Ovary (tissue), 10 donors: ENCODE measurements at regions of chr9 and their contacts with region 1.

Region 1: DNA sequence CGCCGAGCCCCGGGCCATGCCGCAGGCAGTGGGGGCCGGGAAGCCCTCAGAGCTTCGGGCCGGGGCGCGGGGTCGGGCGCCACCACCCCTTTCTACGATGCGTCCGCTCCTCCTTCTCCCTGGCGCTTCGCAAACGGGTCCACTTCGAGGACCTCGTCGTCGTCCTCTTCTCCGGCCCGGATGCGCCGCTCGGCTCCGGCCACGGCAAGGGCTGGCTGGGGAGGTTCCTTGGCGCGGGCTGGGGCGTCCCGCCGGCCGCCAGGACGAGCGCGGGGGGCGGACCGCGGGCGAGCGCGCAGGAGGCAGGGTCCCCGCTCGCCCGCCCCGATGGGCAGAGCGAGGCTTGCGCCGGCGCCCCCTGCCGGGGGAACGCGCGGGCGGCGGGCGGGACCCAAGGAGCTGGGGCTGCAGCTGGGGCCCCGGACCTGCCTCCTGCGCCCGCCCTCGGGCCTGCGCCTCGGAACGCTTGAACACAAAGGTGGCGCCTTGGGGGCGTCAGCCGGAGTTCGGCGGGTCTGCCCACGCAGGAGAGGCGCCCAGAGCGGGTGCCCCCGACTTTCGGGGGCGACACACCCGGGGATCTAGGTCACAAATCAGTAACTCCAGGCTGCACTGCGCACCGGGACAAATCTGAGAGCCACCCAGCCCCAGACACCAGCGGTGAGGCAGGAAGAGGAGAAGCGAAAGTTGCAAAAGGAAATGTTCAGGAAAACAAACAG is at the start of gene ROR2:
- DNase-seq: peak; percentile 77 to 92 (median 85)
- H3K4me3 ChIP-seq: peak within 1 kb of the TSS; percentile 49
- H3K27ac ChIP-seq: peak within 1 kb of the TSS; percentile 61 to 85
- H3K4me1 ChIP-seq: peaks cover 7% of the 10 kb centered on the region
- H3K27me3 ChIP-seq: no peaks in the 10 kb centered on the region
- CTCF ChIP-seq: peak; percentile 20 to 97 (median 92)
- EP300 ChIP-seq: no peak
- POLR2A ChIP-seq: no peak
- total RNA-seq, gene ROR2: 13.1 to 35.5 (median 31.8) TPM

Region 2: DNA sequence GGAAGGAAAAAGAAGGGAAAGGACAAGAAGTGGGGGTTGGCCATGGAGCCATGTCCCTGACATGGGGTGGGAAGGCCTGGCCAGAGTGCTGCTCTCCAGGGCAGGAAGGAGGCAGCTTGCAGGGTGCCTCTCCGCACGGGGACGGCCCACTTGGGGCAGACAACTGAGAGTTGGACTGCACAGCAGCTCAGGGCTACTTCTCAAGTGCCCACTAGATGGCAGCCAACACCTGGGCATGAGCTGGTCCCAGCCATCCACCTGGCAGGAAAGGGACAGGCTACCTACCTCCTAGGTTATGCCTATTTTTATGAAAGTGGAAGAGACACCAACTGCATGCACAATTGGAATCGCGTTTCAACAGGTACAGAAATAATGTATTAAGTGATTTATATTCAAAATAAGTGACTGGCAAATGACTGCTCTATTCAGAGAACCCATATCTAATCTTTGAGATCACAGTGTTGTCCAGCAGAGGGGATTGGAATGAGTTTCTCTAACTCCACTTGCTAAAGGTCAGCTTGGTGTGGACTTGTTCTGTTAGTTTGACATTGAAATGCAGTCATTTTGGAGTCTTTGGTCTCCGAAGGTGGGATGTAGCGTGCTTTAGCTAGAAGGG is 1035.1 kb before region 1 on chr9:
- intact Hi-C with region 1: loop called in 1 of 4 experiments (anchors 10 kb)
- DNase-seq: peak; percentile 62 to 80 (median 77)
- H3K4me3 ChIP-seq: no peak overlapping the region
- H3K27ac ChIP-seq: no peak overlapping the region
- H3K4me1 ChIP-seq: no peaks in the 10 kb centered on the region
- H3K27me3 ChIP-seq: no peaks in the 10 kb centered on the region
- CTCF ChIP-seq: peak; percentile 71 to 91 (median 88)
- EP300 ChIP-seq: no peak
- POLR2A ChIP-seq: no peak

Region 3: GRCh38 chr9:91775011-91775707 is 174.9 kb before region 1 on chr9:
- intact Hi-C with region 1: loop called (anchors 2 to 10 kb)
- DNase-seq: peak; percentile 62 to 80 (median 79)
- H3K4me3 ChIP-seq: no peak overlapping the region
- H3K27ac ChIP-seq: no peak overlapping the region
- H3K4me1 ChIP-seq: peaks cover 3% of the 10 kb centered on the region
- H3K27me3 ChIP-seq: no peaks in the 10 kb centered on the region
- CTCF ChIP-seq: peak; percentile 71 to 87 (median 81)
- EP300 ChIP-seq: no peak
- POLR2A ChIP-seq: no peak

Region 4: GRCh38 chr9:91847581-91848091 is 102.5 kb before region 1 on chr9:
- intact Hi-C with region 1: loop called in 2 of 4 experiments (anchors 10 kb)
- DNase-seq: peak; percentile 52 to 73 (median 63)
- H3K4me3 ChIP-seq: no peak overlapping the region
- H3K27ac ChIP-seq: peak overlapping the region in 1 of 2 donors; percentile 15
- H3K4me1 ChIP-seq: peaks cover 15% of the 10 kb centered on the region
- H3K27me3 ChIP-seq: no peaks in the 10 kb centered on the region
- CTCF ChIP-seq: no peak
- EP300 ChIP-seq: no peak
- POLR2A ChIP-seq: no peak

Region 5: GRCh38 chr9:91884696-91885687 is 65.1 kb before region 1 on chr9:
- intact Hi-C with region 1: no loop called
- DNase-seq: no peak
- H3K4me3 ChIP-seq: no peak overlapping the region
- H3K27ac ChIP-seq: no peak overlapping the region
- H3K4me1 ChIP-seq: peaks cover 35% of the 10 kb centered on the region
- H3K27me3 ChIP-seq: no peaks in the 10 kb centered on the region
- CTCF ChIP-seq: no peak
- EP300 ChIP-seq: no peak
- POLR2A ChIP-seq: no peak

Region 6: GRCh38 chr9:91898451-91899218 is 51.5 kb before region 1 on chr9:
- intact Hi-C with region 1: loop called in 1 of 4 experiments (anchors 5 kb)
- DNase-seq: no peak
- H3K4me3 ChIP-seq: no peak overlapping the region
- H3K27ac ChIP-seq: no peak overlapping the region
- H3K4me1 ChIP-seq: peaks cover 21% of the 10 kb centered on the region
- H3K27me3 ChIP-seq: no peaks in the 10 kb centered on the region
- CTCF ChIP-seq: no peak
- EP300 ChIP-seq: no peak
- POLR2A ChIP-seq: no peak

Region 7: GRCh38 chr9:92115071-92115858 is 165.2 kb after region 1 on chr9 and contains the start of gene SPTLC1:
- intact Hi-C with region 1: loop called in 2 of 4 experiments (anchors 10 kb)
- DNase-seq: peak; percentile 92 to 97 (median 95)
- H3K4me3 ChIP-seq: peak within 1 kb of the TSS; percentile 69
- H3K27ac ChIP-seq: peak within 1 kb of the TSS; percentile 45 to 76
- H3K4me1 ChIP-seq: no peaks in the 10 kb centered on the region
- H3K27me3 ChIP-seq: no peaks in the 10 kb centered on the region
- CTCF ChIP-seq: no peak
- EP300 ChIP-seq: peak; percentile 32
- POLR2A ChIP-seq: peak; percentile 82
- total RNA-seq, gene SPTLC1: 60.1 to 80.2 (median 72.0) TPM